Common myeloid progenitor, CD34-positive (primary cell): ENCODE measurements at regions of chr17 and their contacts with region 1.

Region 1: GRCh38 chr17:49434821-49435670 is 20.4 kb upstream of the PHB1 start:
- DNase-seq: peak; percentile 40 to 52 (median 46)
- H3K4me3 ChIP-seq: no peak overlapping the region
- H3K27ac ChIP-seq: no peak overlapping the region
- H3K4me1 ChIP-seq: peaks cover 3 to 13% (median 11%) of the 10 kb centered on the region in 4 experiments
- H3K27me3 ChIP-seq: peaks cover 0 to 14% (median 7%) of the 10 kb centered on the region in 5 experiments

Region 2: DNA sequence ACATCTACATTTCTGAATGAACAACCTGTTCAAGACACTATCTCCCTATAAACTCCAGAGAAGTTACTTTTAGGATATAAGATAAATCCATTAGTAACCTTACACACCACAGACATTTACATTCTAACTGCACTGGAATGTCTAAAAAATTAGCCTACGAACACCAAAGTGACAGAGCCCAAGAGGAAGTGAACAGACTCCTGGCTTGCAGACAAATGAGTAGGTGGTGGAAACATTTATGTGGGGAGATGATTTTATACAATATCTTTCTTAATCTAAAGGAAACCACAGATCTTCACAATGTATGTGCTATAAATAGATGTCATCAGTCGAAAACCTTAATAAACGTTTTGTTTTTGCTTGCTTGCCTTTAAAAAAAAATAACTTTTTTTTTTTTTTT is 91.8 kb before region 1 on chr17:
- CTCF ChIA-PET with region 1: no interaction called
- POLR2A ChIA-PET with region 1: no interaction called
- DNase-seq: peak in 2 of 3 donors; percentile 63 to 79
- H3K4me3 ChIP-seq: peak overlapping the region in 3 of 7 experiments; percentile 23 to 58 (median 51)
- H3K27ac ChIP-seq: no peak overlapping the region
- H3K4me1 ChIP-seq: peaks cover 8 to 26% (median 20%) of the 10 kb centered on the region in 4 experiments
- H3K27me3 ChIP-seq: no peaks in the 10 kb centered on the region

Region 3: DNA sequence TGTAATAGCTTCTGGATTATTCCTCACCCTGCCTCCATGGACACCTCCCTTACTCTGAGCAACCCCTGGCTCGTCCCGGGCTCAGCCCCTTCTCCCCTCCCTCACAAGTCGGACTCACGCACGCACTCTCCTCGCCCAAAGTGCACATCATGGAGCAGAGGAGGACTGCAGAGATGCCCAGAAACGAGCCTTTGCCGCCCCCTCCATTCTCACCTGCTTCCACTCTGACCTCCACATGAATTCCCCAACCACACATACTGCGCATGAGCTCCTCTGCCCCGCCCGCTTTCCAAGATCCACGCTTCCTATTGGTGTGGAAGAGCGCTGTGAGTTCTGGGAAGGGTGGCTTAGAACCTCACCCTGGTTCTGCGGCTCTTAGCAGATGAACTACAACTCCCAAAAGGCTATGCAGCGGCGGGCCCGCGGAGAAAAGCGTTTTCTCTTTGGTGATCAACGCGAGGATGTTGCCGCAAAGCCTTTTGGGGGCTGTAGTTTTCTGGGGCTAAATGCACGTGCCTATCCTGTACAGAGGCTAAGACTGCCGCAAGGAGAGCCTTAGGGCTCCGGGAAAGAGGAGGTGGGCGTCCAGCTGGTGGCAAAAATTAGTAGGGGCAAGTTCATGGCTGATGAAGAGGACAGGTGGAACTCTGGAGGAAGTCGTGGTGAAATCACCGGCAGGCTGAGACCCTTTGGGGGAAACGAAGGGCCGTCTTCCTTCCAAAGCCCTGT is 20.3 kb before region 1 on chr17 and contains the start of gene PHB1:
- CTCF ChIA-PET with region 1: interaction called, 95 read pairs
- POLR2A ChIA-PET with region 1: no interaction called
- DNase-seq: peak; percentile 97 to 99 (median 98)
- H3K4me3 ChIP-seq: peak within 1 kb of the TSS; percentile 80 to 99 (median 88)
- H3K27ac ChIP-seq: peak within 1 kb of the TSS; percentile 30 to 72
- H3K4me1 ChIP-seq: peaks cover 9 to 25% (median 19%) of the 10 kb centered on the region in 4 experiments
- H3K27me3 ChIP-seq: no peaks in the 10 kb centered on the region

Region 4: GRCh38 chr17:49585422-49586027 is 150.5 kb after region 1 on chr17:
- CTCF ChIA-PET with region 1: no interaction called
- POLR2A ChIA-PET with region 1: no interaction called
- DNase-seq: peak in 1 of 3 donors; percentile 20
- H3K4me3 ChIP-seq: no peak overlapping the region
- H3K27ac ChIP-seq: no peak overlapping the region
- H3K4me1 ChIP-seq: peaks cover 0 to 5% (median 2%) of the 10 kb centered on the region in 4 experiments
- H3K27me3 ChIP-seq: no peaks in the 10 kb centered on the region